ENCODE measurements at regions of chr7 and their contacts with region 1.

Region 1: DNA sequence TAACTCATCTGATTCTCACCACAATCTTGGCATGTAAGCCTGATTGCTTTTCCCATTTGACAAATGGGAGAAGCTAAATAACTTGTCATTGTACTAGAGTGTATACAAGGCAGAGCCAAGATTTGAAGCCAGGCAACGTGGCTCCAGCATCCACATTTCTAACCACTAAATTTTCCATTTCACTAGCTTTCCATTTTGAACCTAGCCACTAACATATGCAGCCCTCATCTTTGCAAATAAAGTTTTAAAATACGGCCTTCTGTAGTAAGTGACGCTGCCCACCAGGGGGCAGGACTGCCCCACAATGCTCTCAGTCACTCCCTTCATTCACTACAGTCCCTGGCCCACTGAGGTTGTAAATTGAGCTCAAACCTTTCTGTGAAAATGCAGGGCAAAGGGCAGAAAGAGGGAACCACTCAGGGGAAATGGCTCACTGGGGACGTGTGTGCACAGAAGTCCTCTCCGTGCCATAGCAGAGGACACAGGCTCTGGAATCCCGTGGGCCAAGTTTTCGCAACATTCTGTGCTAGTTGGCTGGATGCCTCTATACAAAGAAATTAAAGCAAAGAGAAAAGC is 315.7 kb downstream of the TNS3 start:
- DNase-seq: peak; percentile 70
- ATAC-seq: peak; percentile 93
- H3K4me3 ChIP-seq: no peak overlapping the region
- H3K4me3 Mint-ChIP-seq: no peak overlapping the region
- H3K27ac ChIP-seq: no peak overlapping the region
- H3K27ac Mint-ChIP-seq: no peak overlapping the region
- H3K4me1 ChIP-seq: no peaks in the 10 kb centered on the region
- H3K4me1 Mint-ChIP-seq: no peaks in the 10 kb centered on the region
- H3K27me3 ChIP-seq: no peaks in the 10 kb centered on the region
- H3K27me3 Mint-ChIP-seq: no peaks in the 10 kb centered on the region
- CTCF ChIP-seq: peak; percentile 93

Region 2: GRCh38 chr7:47277321-47277792 is 11.1 kb after region 1 on chr7:
- CTCF ChIA-PET with region 1: interaction called, 16 read pairs
- POLR2A ChIA-PET with region 1: no interaction called
- intact Hi-C with region 1: no loop called
- DNase-seq: no peak
- ATAC-seq: no peak
- H3K4me3 ChIP-seq: no peak overlapping the region
- H3K4me3 Mint-ChIP-seq: no peak overlapping the region
- H3K27ac ChIP-seq: no peak overlapping the region
- H3K27ac Mint-ChIP-seq: no peak overlapping the region
- H3K4me1 ChIP-seq: peaks cover 4 to 5% of the 10 kb centered on the region in 2 donors
- H3K4me1 Mint-ChIP-seq: peaks cover 13% of the 10 kb centered on the region
- H3K27me3 ChIP-seq: no peaks in the 10 kb centered on the region
- H3K27me3 Mint-ChIP-seq: no peaks in the 10 kb centered on the region
- CTCF ChIP-seq: no peak

Region 3: DNA sequence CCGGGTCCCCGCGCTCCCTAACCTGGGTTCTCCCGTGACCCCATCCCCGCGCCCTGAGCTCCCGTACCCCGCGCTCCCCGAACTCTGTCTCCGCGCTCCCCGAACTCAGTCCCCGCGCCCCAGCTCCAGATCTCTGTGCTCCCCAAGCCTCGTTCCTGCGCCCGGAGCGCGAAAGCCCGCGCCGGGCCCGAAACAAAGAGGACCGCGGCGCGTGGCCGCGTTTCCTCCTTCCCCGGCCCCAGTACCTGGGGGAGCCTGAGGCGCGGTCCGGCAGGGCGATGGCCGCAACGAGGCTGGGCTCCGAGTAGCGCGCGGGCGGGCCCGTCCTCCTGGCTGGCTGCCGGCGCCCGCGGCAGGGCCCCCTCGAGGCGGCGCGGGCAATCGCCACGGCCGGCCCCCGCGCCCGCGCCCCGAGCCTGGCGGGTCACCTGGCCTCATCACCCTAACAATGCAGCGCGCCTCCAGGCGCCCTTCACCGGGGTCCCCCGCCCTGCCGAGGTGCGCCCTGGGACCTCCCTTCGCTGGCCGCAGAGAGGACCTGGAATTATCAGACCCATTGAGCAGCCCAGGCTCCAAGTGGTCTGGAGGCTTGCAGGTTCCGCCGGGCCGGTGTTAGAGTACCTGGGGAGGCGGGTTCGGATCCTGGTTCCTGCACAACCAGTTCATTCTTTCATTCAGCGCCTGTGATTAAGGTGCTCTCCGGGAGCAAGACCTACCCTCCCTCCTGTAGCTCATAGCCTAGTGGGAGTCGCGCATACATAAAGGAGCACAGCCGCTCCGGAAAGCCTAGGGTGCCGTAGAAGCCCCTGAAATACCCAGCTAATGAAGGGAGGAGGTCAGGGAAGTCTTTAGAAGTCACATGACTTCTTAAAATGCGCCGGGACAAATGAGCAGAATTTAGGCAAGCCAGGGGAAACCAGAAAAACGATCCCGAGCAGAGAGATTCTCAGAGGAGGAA is 315.9 kb after region 1 on chr7 and contains the start of gene TNS3:
- CTCF ChIA-PET with region 1: no interaction called
- POLR2A ChIA-PET with region 1: no interaction called
- intact Hi-C with region 1: loop called (anchors 1 kb)
- DNase-seq: peak; percentile 76
- ATAC-seq: peak; percentile 80
- H3K4me3 ChIP-seq: peak within 1 kb of the TSS; percentile 58 to 75 (median 70)
- H3K4me3 Mint-ChIP-seq: peak within 1 kb of the TSS; percentile 83
- H3K27ac ChIP-seq: peak within 1 kb of the TSS; percentile 13 to 40
- H3K27ac Mint-ChIP-seq: peak within 1 kb of the TSS; percentile 90
- H3K4me1 ChIP-seq: peaks cover 37 to 55% of the 10 kb centered on the region in 2 donors
- H3K4me1 Mint-ChIP-seq: peaks cover 61% of the 10 kb centered on the region
- H3K27me3 ChIP-seq: peaks cover 0 to 8% (median 0%) of the 10 kb centered on the region in 4 experiments
- H3K27me3 Mint-ChIP-seq: no peaks in the 10 kb centered on the region
- CTCF ChIP-seq: peak; percentile 33
- total RNA-seq, gene TNS3: 70.1 and 77.5 TPM in 2 replicates

Region 4: DNA sequence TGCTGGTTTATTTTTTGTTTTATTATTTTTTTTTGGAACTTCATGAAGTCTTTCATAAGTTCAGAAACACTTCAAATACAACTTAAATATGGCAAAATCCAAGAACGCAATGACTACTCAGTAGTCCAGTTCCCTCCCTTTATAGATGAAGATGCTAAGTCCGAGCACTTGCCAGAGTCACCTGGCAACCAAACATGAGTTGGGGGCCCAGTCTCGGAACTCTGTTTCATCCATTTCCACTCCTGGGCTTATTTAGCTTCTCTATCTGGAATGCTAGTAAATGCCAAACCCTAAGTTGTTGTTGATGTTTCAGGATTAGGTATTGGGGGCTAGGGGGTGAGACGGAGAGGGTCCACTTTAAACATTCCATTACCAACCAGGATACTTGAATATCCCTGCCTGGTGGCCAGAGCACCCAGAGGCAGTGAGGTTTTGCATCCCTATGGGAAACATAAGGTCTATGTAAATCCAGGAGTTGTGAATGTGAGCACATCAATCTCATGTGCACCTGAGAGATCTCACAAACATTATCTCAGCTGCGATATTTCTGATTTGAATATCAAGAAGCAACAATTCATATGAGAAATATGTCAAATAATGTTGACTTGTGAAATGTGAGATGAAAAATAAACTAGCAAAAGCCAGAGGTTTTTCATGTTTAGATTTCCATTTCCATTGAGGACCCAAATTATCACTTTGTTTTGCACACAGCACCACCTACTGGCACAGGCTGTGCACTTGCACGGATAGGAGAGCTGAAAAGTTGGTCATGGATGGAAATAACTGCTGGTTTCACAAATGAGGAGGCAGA is 552.8 kb after region 1 on chr7:
- CTCF ChIA-PET with region 1: interaction called, 99 read pairs
- POLR2A ChIA-PET with region 1: no interaction called
- intact Hi-C with region 1: loop called (anchors 1 kb)
- DNase-seq: peak; percentile 79
- ATAC-seq: peak; percentile 69
- H3K4me3 ChIP-seq: no peak overlapping the region
- H3K4me3 Mint-ChIP-seq: no peak overlapping the region
- H3K27ac ChIP-seq: no peak overlapping the region
- H3K27ac Mint-ChIP-seq: no peak overlapping the region
- H3K4me1 ChIP-seq: peaks cover 0 to under 1% of the 10 kb centered on the region in 2 donors
- H3K4me1 Mint-ChIP-seq: peaks cover 6% of the 10 kb centered on the region
- H3K27me3 ChIP-seq: no peaks in the 10 kb centered on the region
- H3K27me3 Mint-ChIP-seq: no peaks in the 10 kb centered on the region
- CTCF ChIP-seq: peak; percentile 99

Region 5: DNA sequence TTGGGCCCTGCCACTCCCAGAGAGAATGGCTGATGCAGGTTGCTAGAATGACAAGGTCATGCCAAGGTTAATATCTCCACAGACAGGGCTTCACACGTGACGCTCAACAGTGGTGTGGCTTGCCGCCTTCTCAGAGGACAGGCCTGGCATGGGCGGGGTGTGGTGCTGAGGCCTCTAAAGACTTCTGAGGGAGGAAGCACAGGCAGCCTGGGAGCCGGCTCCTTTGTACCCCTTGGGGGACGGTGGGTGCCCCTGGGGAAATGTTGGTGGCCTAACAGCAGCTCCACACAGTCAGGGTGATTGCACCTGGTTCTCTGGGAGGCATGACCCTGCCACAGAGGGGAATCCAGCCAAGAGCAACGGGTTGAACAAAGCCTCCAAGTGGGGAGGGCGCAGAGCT is 567.0 kb after region 1 on chr7:
- CTCF ChIA-PET with region 1: interaction called, 10 read pairs
- POLR2A ChIA-PET with region 1: no interaction called
- intact Hi-C with region 1: no loop called
- DNase-seq: peak; percentile 36
- ATAC-seq: peak; percentile 93
- H3K4me3 ChIP-seq: no peak overlapping the region
- H3K4me3 Mint-ChIP-seq: peak overlapping the region; percentile 30
- H3K27ac ChIP-seq: no peak overlapping the region
- H3K27ac Mint-ChIP-seq: peak overlapping the region; percentile 12
- H3K4me1 ChIP-seq: peaks cover 11 to 16% of the 10 kb centered on the region in 2 donors
- H3K4me1 Mint-ChIP-seq: peaks cover 20% of the 10 kb centered on the region
- H3K27me3 ChIP-seq: peaks cover 0 to 8% (median 4%) of the 10 kb centered on the region in 4 experiments
- H3K27me3 Mint-ChIP-seq: peaks cover 4% of the 10 kb centered on the region
- CTCF ChIP-seq: no peak

Region 6: DNA sequence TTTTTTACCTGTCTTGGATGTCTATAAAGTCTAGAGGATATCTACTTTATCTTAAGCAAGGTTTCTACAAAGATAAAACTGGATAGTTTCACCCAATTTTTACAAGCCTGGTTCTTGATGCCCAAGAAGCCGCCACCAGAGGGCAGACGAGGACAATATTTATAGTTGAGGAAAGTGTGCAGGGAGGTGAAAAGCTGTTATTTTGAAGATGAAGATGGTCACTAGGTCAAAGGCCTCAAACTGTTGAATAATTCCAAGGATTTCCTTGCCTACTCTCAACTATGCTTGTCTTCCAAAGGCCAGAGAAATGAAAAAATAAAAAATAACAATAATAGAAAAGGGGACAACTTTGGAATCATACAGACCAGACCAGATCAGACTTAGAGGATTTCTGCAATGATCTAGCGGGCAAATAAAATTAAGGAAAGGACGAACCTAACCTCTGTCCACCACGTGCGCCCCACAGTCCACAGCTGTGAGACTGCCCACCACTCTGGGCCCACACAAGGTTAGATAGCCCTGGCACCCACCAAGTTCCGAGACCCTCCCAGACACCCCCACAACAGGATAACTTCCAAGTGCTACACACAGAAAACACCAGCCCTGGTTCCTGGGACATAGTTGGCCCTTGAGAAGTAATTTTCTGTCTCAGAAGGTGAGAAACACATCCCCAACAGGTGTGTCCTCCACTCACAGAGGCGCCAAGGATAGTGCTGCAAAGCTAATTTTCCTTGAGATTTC is 679.2 kb after region 1 on chr7:
- CTCF ChIA-PET with region 1: interaction called, 29 read pairs
- POLR2A ChIA-PET with region 1: no interaction called
- intact Hi-C with region 1: no loop called
- DNase-seq: peak; percentile 72
- ATAC-seq: peak; percentile 62
- H3K4me3 ChIP-seq: no peak overlapping the region
- H3K4me3 Mint-ChIP-seq: no peak overlapping the region
- H3K27ac ChIP-seq: no peak overlapping the region
- H3K27ac Mint-ChIP-seq: no peak overlapping the region
- H3K4me1 ChIP-seq: no peaks in the 10 kb centered on the region
- H3K4me1 Mint-ChIP-seq: no peaks in the 10 kb centered on the region
- H3K27me3 ChIP-seq: no peaks in the 10 kb centered on the region
- H3K27me3 Mint-ChIP-seq: no peaks in the 10 kb centered on the region
- CTCF ChIP-seq: peak; percentile 87

Region 7: GRCh38 chr7:48109848-48110663 is 843.8 kb after region 1 on chr7:
- CTCF ChIA-PET with region 1: interaction called, 18 read pairs
- POLR2A ChIA-PET with region 1: no interaction called
- intact Hi-C with region 1: no loop called
- DNase-seq: peak; percentile 85
- ATAC-seq: peak; percentile 96
- H3K4me3 ChIP-seq: no peak overlapping the region
- H3K4me3 Mint-ChIP-seq: no peak overlapping the region
- H3K27ac ChIP-seq: no peak overlapping the region
- H3K27ac Mint-ChIP-seq: no peak overlapping the region
- H3K4me1 ChIP-seq: peaks cover 0 to 3% of the 10 kb centered on the region in 2 donors
- H3K4me1 Mint-ChIP-seq: peaks cover 4% of the 10 kb centered on the region
- H3K27me3 ChIP-seq: no peaks in the 10 kb centered on the region
- H3K27me3 Mint-ChIP-seq: peaks cover 3% of the 10 kb centered on the region
- CTCF ChIP-seq: peak; percentile 97

Measured in B cell (primary cell).